ENCODE measurements at regions of chr11 and their contacts with region 1.

Region 1: DNA sequence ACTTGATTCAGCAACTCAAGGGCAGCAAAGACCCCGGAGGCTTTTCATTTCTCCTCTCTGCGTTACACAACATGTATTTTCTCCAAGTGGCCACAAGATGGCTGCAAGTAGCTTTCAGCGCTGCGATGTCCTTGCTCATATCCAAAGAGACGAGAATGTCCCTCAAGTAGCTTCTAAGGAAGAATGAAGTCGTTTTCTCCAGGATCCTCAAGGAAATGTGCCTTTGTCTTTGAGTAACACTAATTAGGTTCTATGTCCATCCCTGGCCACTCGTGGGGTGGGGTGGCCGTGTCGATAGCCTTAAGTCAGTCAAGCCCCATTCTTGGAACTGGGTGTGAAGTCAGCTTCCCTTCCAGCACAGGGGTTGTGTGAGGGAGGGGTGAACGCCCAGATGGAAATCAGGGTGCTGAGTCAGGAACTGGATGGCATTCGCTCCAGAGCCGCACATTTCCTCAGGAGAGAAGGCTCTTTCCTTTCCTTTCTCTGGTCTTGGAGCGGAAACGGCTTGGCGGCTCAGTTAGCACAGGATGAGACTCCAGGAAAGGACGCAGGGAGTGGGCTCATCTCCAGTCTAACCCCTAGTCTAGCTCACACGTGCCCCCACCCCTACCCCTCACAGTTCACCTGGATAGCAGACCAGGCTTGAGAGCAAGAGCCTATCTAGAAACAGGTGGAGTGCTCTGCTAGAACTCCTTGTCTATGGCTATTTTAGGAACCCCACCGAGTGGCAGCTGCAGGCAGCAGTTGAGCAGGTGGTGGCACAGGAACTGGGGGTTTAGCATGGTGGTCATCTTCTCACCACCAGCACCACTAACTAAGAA is 44.3 kb downstream of the NNMT start:
- DNase-seq: no peak
- H3K4me3 ChIP-seq: peak overlapping the region; percentile 28
- H3K27me3 ChIP-seq: no peaks in the 10 kb centered on the region
- CTCF ChIP-seq: peak; percentile 86

Region 2: DNA sequence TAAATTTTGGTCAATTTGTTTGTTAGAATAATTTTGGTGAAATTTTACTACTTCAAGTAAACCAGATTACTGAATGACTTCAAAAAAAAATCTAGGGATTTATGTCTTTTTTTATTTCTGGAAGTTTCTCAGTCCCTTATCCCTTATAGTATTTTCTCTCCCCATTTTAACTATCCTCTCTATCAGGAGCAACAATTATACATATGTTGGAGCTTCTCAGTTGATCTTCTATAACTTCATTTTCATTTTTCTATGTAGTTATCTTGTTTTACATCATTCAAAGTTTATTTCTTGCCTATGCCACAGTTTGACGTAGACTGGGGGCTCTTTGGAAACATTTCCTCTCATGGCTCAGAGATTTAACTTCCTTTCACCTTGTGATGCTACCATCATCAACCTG is 10.1 kb before region 1 on chr11:
- CTCF ChIA-PET with region 1: interaction called, 18 read pairs
- POLR2A ChIA-PET with region 1: no interaction called
- DNase-seq: no peak
- H3K4me3 ChIP-seq: no peak overlapping the region
- H3K27me3 ChIP-seq: no peaks in the 10 kb centered on the region
- CTCF ChIP-seq: no peak

Measured in BJ (cell line).